ENCODE measurements at regions of chrX and their contacts with region 1.

Region 1: DNA sequence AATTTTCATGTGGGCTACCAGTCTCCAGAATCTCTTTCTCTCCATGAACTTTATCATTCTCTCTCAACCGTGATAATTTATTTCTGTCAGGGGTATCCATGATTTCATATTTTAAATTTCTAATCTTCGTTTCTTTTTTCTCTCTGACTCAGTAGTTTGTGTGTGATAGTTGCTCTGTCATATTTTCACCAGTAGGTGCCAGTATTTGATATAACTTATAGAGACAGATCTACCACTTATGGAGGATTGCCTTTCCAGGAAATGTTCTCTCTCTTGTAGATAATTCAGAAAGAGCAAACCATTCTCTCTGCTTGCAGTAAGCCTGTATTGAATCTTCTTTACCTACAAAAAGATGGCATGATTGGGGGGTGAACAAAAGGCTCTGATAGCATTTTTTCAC is 79.3 kb upstream of the DYNLT3 start:
- H3K4me3 Mint-ChIP-seq: no peak overlapping the region
- H3K27ac Mint-ChIP-seq: no peak overlapping the region
- H3K4me1 Mint-ChIP-seq: no peaks in the 10 kb centered on the region
- H3K27me3 Mint-ChIP-seq: peaks cover 1% of the 10 kb centered on the region

Region 2: DNA sequence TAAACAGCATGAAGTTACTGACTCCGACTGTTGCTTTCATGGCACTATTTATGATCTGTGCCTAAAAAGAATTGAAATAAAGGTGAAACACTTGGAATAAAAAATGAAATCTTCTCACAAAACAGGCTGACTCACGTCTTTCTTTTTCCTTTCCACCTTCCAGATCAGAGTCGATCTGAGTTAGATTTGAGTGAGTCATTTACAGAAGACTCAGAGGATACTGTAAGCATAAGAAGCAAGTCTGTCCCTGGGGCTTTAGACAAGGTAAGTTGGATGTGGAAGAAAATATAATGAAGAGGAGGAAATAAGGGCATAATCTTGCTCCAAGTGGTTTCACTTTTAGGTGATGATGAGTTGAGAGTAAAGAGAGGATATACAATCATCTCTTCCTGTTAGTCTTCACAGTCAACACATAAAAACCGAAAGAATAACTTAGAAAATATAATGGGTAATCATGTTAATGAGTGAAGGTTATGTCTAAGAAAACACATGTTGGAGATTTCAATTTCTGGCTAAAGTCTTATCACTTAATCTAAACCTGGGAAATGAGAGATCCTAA is 169.3 kb after region 1 on chrX:
- intact Hi-C with region 1: no loop called
- H3K4me3 Mint-ChIP-seq: no peak overlapping the region
- H3K27ac Mint-ChIP-seq: no peak overlapping the region
- H3K4me1 Mint-ChIP-seq: no peaks in the 10 kb centered on the region
- H3K27me3 Mint-ChIP-seq: no peaks in the 10 kb centered on the region

Region 3: DNA sequence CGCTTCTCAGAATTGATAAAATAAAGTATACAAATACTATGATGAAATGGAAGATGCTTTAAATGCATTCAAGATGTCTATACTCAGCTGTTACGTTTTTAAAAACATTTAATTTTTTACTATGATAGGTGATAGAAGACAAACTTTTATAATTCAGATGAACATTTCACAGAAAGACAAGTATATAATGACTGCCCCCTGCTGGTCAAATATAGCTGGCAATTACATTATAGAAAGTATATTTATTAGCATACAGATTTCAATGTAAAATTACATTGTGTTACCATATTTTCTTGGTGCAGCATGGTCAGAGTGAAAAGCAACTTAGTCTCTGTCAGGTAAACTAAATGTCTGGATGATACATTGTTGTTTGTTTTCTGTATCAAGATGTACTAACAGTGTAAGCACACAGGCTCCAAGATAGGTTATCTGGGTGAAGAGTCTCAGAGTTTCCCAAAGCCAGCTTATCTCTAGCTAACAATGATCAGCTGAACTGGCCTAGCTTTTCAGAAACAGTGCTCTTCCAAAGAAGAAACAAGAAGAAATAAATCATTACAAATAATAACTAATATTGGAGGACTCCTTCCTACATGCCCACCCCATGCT is 239.9 kb after region 1 on chrX:
- intact Hi-C with region 1: loop called (anchors 2 kb)
- H3K4me3 Mint-ChIP-seq: no peak overlapping the region
- H3K27ac Mint-ChIP-seq: no peak overlapping the region
- H3K4me1 Mint-ChIP-seq: peaks cover 5% of the 10 kb centered on the region
- H3K27me3 Mint-ChIP-seq: no peaks in the 10 kb centered on the region

Region 4: GRCh38 chrX:38327007-38327774 is 400.5 kb after region 1 on chrX and contains the start of gene RPGR:
- intact Hi-C with region 1: loop called (anchors 5 kb)
- H3K4me3 Mint-ChIP-seq: peak within 1 kb of the TSS; percentile 93
- H3K27ac Mint-ChIP-seq: peak within 1 kb of the TSS; percentile 91
- H3K4me1 Mint-ChIP-seq: peaks cover 16% of the 10 kb centered on the region
- H3K27me3 Mint-ChIP-seq: no peaks in the 10 kb centered on the region